Pancreas (tissue), 10 donors: ENCODE measurements at regions of chr4 and their contacts with region 1.

Region 1: DNA sequence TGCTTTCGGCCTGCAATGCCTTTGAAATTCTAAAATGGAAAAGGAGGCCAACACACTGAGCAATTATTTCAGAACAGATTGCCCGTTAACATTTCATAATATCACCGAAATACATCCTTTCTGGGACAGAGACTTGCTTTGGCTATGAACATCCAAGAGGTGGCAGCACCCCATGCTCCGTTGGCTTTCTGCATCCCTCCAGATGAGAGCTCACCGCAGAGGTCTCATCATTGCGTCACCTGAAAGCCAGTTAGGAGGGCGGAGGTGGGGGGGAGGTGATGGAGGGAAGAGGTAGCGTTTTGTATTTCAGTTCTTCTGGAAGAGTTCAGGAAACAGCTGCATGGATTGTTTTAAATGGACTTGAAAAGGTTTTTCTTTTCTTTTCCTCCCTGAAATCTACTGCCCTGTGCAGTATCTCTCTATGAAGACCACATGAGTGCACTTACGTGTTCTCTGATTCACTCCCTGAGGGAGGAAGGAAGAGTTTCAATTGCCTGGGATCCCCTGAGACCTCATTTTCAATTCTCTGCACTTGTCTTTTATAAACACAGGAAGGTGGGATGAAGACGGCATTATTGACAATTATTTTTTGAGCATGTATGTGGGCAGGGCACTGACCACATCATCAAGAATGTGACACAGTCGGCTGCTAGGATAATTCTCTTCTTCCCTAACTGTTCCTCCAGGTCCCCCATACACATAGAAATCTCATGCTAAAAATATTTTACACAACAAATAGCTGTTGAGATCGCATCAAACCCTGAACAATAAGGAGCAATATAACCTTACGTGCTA is 166.9 kb upstream of the PGRMC2 start:
- DNase-seq: peak; percentile 62 to 76 (median 67)
- ATAC-seq: peak; percentile 86 to 98 (median 98)
- H3K4me3 ChIP-seq: no peak overlapping the region
- H3K27ac ChIP-seq: no peak overlapping the region
- H3K4me1 ChIP-seq: no peaks in the 10 kb centered on the region
- H3K27me3 ChIP-seq: no peaks in the 10 kb centered on the region
- CTCF ChIP-seq: peak in 3 of 4 donors; percentile 49 to 60 (median 54)

Region 2: GRCh38 chr4:128244379-128244778 is 210.1 kb before region 1 on chr4:
- intact Hi-C with region 1: no loop called
- DNase-seq: no peak
- ATAC-seq: no peak
- H3K4me3 ChIP-seq: no peak overlapping the region
- H3K27ac ChIP-seq: no peak overlapping the region
- H3K4me1 ChIP-seq: no peaks in the 10 kb centered on the region
- H3K27me3 ChIP-seq: no peaks in the 10 kb centered on the region
- CTCF ChIP-seq: no peak

Region 3: DNA sequence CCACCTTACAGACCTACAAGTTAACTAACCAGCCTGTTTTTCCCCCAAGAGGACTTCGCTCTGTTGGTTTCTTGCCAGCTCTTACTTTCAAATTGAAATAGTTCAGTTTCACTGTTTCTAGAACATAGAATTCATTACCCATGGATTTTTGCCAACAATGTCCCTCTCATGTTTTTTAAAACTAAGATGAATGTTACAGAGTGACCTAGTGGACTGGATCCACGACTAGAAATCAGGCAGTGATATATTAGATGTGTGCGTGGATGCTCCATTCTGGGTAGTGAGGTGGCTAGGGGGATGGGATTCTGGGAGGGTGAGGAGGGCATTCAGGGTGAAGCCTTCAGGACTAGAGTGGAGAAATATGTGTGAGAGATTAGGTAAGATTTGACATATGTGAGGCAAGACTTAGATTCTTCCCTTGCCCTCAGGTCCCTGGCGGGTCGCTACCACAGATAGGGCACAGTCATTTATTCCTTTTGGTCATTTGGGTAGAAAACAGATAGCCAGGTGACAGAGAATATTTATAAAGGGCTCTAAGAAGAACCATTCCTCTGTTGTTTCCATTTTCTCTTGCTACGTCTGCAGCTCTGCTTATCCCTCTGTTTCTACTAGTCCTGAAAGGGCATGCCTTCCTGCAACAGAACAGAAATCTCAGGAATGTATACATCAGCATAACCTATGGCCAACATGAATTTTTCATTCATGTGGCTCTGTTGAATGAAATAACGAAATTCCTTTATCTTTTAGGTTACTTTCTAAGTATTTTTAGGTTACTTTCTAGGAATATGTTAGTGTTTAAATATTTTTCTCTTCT is 339.6 kb after region 1 on chr4:
- intact Hi-C with region 1: no loop called
- DNase-seq: no peak
- ATAC-seq: peak in 1 of 4 donors; percentile 34
- H3K4me3 ChIP-seq: no peak overlapping the region
- H3K27ac ChIP-seq: no peak overlapping the region
- H3K4me1 ChIP-seq: no peaks in the 10 kb centered on the region
- H3K27me3 ChIP-seq: no peaks in the 10 kb centered on the region
- CTCF ChIP-seq: no peak

Region 4: GRCh38 chr4:128863312-128864075 is 409.0 kb after region 1 on chr4:
- intact Hi-C with region 1: loop called in 1 of 3 experiments (anchors 10 kb)
- DNase-seq: peak; percentile 64 to 88 (median 81)
- ATAC-seq: peak; percentile 65 to 87 (median 83)
- H3K4me3 ChIP-seq: no peak overlapping the region
- H3K27ac ChIP-seq: no peak overlapping the region
- H3K4me1 ChIP-seq: peaks cover 0 to 6% (median 5%) of the 10 kb centered on the region in 3 donors
- H3K27me3 ChIP-seq: no peaks in the 10 kb centered on the region
- CTCF ChIP-seq: peak; percentile 66 to 89 (median 84)